B cell (primary cell): ENCODE measurements at regions of chr20 and their contacts with region 1.

Region 1: DNA sequence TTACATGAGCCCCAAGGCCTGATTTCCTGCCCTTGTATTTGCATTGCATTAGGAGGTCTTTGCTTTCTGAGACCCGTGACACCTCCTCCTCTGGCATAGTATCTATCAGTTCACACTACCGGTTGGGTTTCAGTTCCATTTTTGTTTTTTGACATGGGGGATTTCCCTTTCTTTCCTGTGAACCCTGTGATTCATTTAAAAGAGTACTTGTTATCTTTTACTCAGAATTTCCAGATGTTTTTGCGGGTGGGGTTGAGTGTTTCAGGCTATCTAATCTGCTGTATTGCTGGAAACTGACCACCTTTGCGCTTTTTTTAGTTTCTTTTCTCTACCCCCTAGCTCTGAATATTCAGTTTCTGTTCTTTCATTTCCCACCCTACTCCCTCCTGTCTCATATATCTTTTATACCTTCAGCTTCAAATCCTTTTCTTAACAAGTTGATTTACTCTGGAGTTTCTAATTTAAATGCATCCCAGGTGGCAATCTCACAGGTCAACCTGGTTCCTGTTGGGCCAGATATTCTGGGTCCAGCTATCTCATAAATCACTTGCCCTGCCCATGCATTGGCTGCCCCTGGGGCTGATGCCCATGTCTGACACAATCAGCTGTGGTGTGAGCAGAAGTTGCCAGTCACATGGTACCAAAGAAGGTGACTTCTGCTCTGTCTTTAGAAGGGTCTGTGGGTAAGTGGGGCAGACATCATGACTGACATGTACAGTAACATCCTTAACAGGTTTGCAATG is 14.3 kb upstream of the NCOA3 start:
- DNase-seq: peak; percentile 92
- ATAC-seq: peak; percentile 78
- H3K4me3 ChIP-seq: peak overlapping the region in 3 of 5 experiments; percentile 29 to 59 (median 38)
- H3K4me3 Mint-ChIP-seq: peak overlapping the region; percentile 70
- H3K27ac ChIP-seq: peak overlapping the region; percentile 85 to 86
- H3K27ac Mint-ChIP-seq: peak overlapping the region; percentile 89
- H3K4me1 ChIP-seq: peaks cover 47 to 68% of the 10 kb centered on the region in 2 donors
- H3K4me1 Mint-ChIP-seq: peaks cover 57% of the 10 kb centered on the region
- H3K27me3 ChIP-seq: no peaks in the 10 kb centered on the region
- H3K27me3 Mint-ChIP-seq: no peaks in the 10 kb centered on the region
- CTCF ChIP-seq: no peak

Region 2: GRCh38 chr20:47272893-47273590 is 214.3 kb before region 1 on chr20:
- CTCF ChIA-PET with region 1: interaction called, 13 read pairs
- POLR2A ChIA-PET with region 1: no interaction called
- intact Hi-C with region 1: no loop called
- DNase-seq: peak; percentile 79
- ATAC-seq: peak; percentile 86
- H3K4me3 ChIP-seq: no peak overlapping the region
- H3K4me3 Mint-ChIP-seq: no peak overlapping the region
- H3K27ac ChIP-seq: no peak overlapping the region
- H3K27ac Mint-ChIP-seq: peak overlapping the region; percentile 74
- H3K4me1 ChIP-seq: peaks cover 0 to 5% of the 10 kb centered on the region in 2 donors
- H3K4me1 Mint-ChIP-seq: peaks cover 25% of the 10 kb centered on the region
- H3K27me3 ChIP-seq: no peaks in the 10 kb centered on the region
- H3K27me3 Mint-ChIP-seq: no peaks in the 10 kb centered on the region
- CTCF ChIP-seq: peak; percentile 95

Region 3: DNA sequence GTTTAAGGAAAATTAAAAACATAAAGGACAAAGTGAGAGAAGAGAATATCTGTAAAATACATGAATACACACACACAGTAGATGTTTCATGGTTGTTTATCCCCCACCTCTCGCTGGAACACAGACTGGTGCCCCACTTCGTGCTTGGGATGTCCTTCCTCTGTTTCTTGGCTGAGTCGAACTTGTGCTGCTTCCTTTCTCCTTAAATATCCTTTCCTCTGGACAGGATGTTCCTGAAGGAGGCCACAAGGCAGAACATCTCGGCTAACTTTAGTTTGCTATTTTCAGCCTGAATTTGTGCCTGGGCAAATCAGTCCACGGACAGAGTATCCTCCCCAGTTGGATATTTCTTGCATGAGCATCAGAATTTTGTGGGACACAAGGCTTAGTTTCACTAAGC is 76.2 kb before region 1 on chr20:
- CTCF ChIA-PET with region 1: interaction called, 13 read pairs
- POLR2A ChIA-PET with region 1: interaction called, 54 read pairs
- intact Hi-C with region 1: loop called (anchors 1 kb)
- DNase-seq: no peak
- ATAC-seq: no peak
- H3K4me3 ChIP-seq: peak overlapping the region in 4 of 5 experiments; percentile 30 to 56 (median 48)
- H3K4me3 Mint-ChIP-seq: peak overlapping the region; percentile 91
- H3K27ac ChIP-seq: peak overlapping the region; percentile 97 to 99
- H3K27ac Mint-ChIP-seq: peak overlapping the region; percentile 93
- H3K4me1 ChIP-seq: peaks cover 79 to 90% of the 10 kb centered on the region in 2 donors
- H3K4me1 Mint-ChIP-seq: peaks cover 76% of the 10 kb centered on the region
- H3K27me3 ChIP-seq: no peaks in the 10 kb centered on the region
- H3K27me3 Mint-ChIP-seq: no peaks in the 10 kb centered on the region
- CTCF ChIP-seq: no peak

Region 4: DNA sequence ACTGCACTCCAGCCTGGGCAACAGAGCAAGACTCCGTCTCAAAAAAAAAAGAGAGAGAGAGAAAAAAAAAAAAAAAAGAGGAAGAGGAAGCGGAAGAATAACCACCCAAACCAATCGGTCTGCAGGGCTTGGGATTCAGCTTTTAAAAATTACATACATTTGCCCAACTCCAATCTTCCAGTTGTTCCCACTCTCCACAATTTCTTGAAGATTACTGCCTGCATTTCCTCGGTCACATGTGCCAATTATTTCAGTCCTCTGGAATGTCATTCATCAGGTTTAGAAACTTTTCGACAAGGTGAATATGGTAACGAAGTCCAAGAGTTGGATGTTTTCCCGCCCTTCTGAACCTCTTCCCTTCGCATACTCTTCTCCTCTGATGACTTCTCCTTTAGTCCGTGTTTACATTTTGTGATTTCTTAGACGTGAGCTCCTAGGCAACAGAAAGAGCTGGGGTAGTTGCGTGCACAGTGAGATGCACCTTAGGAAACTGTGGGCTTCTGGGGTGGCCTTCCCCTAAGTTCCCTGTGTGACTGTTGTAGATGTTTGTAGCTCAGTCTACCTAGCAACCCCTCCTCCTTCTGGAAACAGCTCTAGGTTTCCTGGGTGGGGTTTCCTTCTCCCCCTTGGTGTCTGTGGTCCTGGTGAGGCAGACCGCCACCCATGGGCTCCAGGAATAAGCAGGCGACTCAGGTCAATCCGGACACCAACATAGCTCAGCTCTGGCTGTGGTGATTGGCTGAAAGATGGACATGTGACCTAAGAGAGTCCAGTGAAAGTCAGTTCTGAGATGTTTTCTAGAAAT is 48.6 kb before region 1 on chr20:
- CTCF ChIA-PET with region 1: interaction called, 6 read pairs
- POLR2A ChIA-PET with region 1: interaction called, 9 read pairs
- intact Hi-C with region 1: loop called (anchors 1 kb)
- DNase-seq: peak; percentile 87
- ATAC-seq: peak; percentile 70
- H3K4me3 ChIP-seq: peak overlapping the region in 1 of 5 experiments; percentile 11
- H3K4me3 Mint-ChIP-seq: peak overlapping the region; percentile 61
- H3K27ac ChIP-seq: peak overlapping the region; percentile 87 to 88
- H3K27ac Mint-ChIP-seq: peak overlapping the region; percentile 90
- H3K4me1 ChIP-seq: peaks cover 41 to 56% of the 10 kb centered on the region in 2 donors
- H3K4me1 Mint-ChIP-seq: peaks cover 48% of the 10 kb centered on the region
- H3K27me3 ChIP-seq: no peaks in the 10 kb centered on the region
- H3K27me3 Mint-ChIP-seq: no peaks in the 10 kb centered on the region
- CTCF ChIP-seq: no peak

Region 5: GRCh38 chr20:47468290-47469050 is 18.9 kb before region 1 on chr20:
- CTCF ChIA-PET with region 1: interaction called, 10 read pairs
- POLR2A ChIA-PET with region 1: interaction called, 26 read pairs
- intact Hi-C with region 1: loop called (anchors 1 kb)
- DNase-seq: peak; percentile 84
- ATAC-seq: peak; percentile 81
- H3K4me3 ChIP-seq: peak overlapping the region in 2 of 5 experiments; percentile 8 to 38
- H3K4me3 Mint-ChIP-seq: peak overlapping the region; percentile 68
- H3K27ac ChIP-seq: peak overlapping the region; percentile 66 to 79
- H3K27ac Mint-ChIP-seq: peak overlapping the region; percentile 95
- H3K4me1 ChIP-seq: peaks cover 42 to 55% of the 10 kb centered on the region in 2 donors
- H3K4me1 Mint-ChIP-seq: peaks cover 48% of the 10 kb centered on the region
- H3K27me3 ChIP-seq: no peaks in the 10 kb centered on the region
- H3K27me3 Mint-ChIP-seq: no peaks in the 10 kb centered on the region
- CTCF ChIP-seq: no peak